A673 (cell line): ENCODE measurements at regions of chr15 and their contacts with region 1.

Region 1: GRCh38 chr15:40044717-40045571 is 6.0 kb upstream of the SRP14 start:
- DNase-seq: peak; percentile 90
- H3K4me3 ChIP-seq: peak overlapping the region; percentile 21
- H3K27ac ChIP-seq: peak overlapping the region; percentile 69
- H3K4me1 ChIP-seq: peaks cover 35% of the 10 kb centered on the region
- H3K27me3 ChIP-seq: no peaks in the 10 kb centered on the region
- CTCF ChIP-seq: peak; percentile 98

Region 2: DNA sequence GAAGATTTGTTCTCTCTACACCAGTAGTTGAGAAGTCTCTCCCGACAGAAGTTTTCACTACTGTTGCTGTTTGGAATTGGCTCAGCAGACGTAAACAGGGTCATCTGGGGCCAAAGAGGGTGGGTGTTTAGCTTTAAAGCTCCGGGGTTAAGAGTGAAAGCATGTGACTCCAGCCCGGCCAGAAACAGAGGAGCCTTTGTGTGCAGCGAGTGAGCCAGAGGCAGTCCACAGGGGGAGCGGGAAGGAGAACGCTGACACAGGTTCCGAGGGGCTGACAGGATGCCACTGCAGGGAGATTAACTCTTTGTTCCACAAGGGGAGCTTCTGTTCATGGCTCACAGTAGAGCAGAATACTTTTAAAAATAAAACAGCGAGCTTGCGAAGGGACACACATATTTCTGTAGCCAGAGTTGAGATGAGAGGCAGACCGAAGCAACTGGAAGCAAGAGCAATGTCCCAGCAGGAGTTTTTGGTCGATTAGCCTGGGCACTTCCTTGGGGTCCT is 36.8 kb after region 1 on chr15:
- CTCF ChIA-PET with region 1: interaction called, 12 read pairs
- POLR2A ChIA-PET with region 1: interaction called, 10 read pairs
- intact Hi-C with region 1: no loop called
- DNase-seq: peak; percentile 77
- H3K4me3 ChIP-seq: peak overlapping the region; percentile 10
- H3K27ac ChIP-seq: peak overlapping the region; percentile 75
- H3K4me1 ChIP-seq: peaks cover 72% of the 10 kb centered on the region
- H3K27me3 ChIP-seq: no peaks in the 10 kb centered on the region
- CTCF ChIP-seq: no peak

Region 3: DNA sequence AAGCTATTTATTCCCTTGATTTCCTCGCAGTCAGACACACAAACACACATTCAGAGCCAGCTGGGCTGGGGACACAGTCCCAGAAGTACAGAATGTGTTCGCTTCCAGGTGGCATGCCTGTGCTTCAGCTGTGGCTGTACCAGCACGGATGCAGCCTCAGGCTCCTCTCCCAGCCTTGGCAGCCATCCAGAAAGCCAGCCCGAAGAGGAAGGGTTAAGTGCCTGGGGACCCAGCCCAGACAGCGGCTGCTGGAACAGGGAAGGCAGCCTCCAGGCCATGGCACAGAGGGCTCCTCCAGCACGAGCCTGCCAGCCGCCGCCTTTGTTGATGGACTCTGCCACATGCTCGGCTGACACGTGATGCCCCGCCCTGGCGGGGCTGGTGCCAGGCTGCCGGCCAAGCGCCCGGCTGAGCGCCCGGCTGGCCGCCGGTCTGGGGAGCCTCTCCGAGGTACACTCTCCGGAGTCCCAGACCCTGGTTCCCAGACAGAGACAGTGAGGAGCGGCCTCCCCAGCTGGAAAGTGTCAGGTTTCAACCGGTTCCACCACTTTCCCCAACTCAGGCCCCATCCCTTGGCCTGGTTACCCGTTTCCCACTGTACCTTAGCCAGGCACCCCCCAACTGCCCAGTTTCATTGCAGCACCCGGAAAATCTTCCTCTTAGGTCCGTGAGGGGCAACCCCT is 58.4 kb after region 1 on chr15:
- CTCF ChIA-PET with region 1: interaction called, 9 read pairs
- POLR2A ChIA-PET with region 1: interaction called, 22 read pairs
- intact Hi-C with region 1: loop called (anchors 2 kb)
- DNase-seq: peak; percentile 51
- H3K4me3 ChIP-seq: no peak overlapping the region
- H3K27ac ChIP-seq: peak overlapping the region; percentile 68
- H3K4me1 ChIP-seq: peaks cover 90% of the 10 kb centered on the region
- H3K27me3 ChIP-seq: no peaks in the 10 kb centered on the region
- CTCF ChIP-seq: no peak

Region 4: GRCh38 chr15:40160689-40161688 is 116.0 kb after region 1 on chr15 and contains the start of gene BUB1B:
- CTCF ChIA-PET with region 1: interaction called, 5 read pairs
- POLR2A ChIA-PET with region 1: interaction called, 3 read pairs
- intact Hi-C with region 1: loop called (anchors 2 kb)
- DNase-seq: peak; percentile 97
- H3K4me3 ChIP-seq: peak within 1 kb of the TSS; percentile 81
- H3K27ac ChIP-seq: peak within 1 kb of the TSS; percentile 79
- H3K4me1 ChIP-seq: peaks cover 17% of the 10 kb centered on the region
- H3K27me3 ChIP-seq: no peaks in the 10 kb centered on the region
- CTCF ChIP-seq: no peak
- total RNA-seq, gene BUB1B: 190 and 196 TPM in 2 replicates

Region 5: DNA sequence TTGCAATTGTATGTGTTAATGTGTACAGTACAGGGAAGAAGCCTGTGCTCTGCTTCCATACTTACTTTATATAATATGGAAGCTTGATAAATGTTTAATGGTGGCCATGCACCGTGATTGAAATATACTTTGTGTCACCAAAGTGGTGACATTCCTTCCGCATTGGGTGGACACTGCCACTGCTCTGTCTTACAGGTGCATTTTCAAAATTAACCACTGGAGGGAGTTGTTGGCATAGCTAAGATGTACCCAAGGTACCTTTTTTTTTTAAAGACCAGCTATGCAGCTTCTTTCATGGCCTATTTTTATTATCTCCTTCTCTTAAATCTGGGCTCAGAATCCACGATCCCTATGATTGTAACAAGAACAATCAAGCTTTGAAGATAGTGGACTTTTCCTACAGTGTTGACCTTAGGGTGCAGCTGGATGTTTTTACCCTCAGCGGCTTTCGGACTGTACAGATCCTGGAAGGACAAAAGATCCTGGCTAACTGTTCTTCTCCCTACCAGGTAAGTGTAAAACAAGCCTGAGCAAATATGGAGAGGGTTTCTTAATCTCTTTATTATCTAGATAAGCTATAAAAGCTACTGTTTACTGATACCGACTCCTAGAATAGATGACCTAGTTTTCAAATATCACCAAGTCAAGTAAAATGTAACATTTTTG is 172.3 kb after region 1 on chr15:
- CTCF ChIA-PET with region 1: interaction called, 6 read pairs
- POLR2A ChIA-PET with region 1: no interaction called
- intact Hi-C with region 1: loop called (anchors 2 kb)
- DNase-seq: peak; percentile 78
- H3K4me3 ChIP-seq: no peak overlapping the region
- H3K27ac ChIP-seq: no peak overlapping the region
- H3K4me1 ChIP-seq: no peaks in the 10 kb centered on the region
- H3K27me3 ChIP-seq: no peaks in the 10 kb centered on the region
- CTCF ChIP-seq: peak; percentile 84

Region 6: DNA sequence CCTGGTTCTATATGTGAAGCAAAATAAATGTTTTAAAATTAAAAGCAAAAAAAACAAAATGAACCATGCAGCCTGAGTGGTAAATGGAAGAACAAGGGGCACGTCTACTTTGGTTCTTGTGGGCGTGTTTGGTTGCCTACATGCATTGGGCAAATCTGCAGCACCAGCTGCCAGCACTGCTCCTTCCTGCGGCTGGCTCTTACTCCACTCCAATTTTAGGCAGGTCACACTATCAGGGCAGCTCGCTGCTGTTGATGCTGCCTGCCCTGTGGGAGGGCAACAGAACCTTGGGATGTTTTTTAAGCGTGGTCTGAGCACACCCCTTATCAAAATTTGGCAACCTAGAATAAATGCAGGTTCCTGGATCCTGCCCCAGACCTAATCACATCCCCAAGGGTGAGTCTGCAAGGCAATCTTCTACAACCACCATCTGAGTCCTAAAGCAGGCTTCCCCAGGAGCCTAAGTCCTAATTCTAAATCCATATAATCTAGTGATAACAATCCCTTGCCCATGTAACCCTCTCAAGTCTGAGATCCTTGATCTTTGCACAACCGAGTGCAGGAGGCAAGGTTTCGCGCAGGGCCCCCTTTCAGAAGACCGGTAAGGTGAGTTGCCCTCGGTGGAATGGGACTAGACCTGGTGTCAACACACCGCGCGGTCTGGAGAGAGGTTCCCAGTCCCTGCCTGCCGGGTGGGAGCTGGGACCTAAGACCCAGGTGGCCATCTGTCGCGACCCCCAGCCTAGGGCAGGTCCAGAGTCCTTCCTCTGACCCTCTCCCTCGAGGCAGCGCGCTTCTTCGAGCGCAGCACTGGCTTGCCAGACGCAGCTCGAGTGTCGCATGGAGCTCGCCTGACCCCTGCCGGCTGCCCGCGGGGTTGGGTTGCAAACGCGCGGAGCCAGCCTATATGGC is 376.6 kb after region 1 on chr15:
- CTCF ChIA-PET with region 1: interaction called, 3 read pairs
- POLR2A ChIA-PET with region 1: no interaction called
- intact Hi-C with region 1: loop called (anchors 10 kb)
- DNase-seq: peak; percentile 78
- H3K4me3 ChIP-seq: no peak overlapping the region
- H3K27ac ChIP-seq: no peak overlapping the region
- H3K4me1 ChIP-seq: no peaks in the 10 kb centered on the region
- H3K27me3 ChIP-seq: no peaks in the 10 kb centered on the region
- CTCF ChIP-seq: peak; percentile 92